Transverse colon (tissue), 4 donors: ENCODE measurements at regions of chr9 and their contacts with region 1.

Region 1: DNA sequence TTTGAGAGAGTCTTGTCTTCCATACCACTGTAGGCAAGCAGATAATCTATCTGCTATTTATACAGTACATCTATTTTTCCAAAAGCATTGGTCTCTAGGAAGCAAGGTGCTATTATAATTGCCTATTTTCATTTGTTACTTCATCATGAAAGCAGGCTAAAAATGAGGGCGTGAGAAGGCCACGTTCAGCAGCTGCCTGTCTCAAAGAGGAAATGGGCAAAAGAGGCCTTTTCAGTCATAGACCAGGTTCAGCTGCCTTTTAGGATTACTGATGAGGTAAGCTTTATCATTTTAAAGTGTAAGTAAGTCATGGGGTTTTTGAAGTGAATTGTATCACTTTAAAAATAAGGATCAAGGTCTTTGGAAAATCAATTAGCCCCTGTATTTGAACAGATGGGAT is 1091.1 kb upstream of the DMAC1 start:
- DNase-seq: no peak
- H3K4me3 ChIP-seq: no peak overlapping the region
- H3K27ac ChIP-seq: no peak overlapping the region
- H3K4me1 ChIP-seq: peaks cover 0 to 20% (median 1%) of the 10 kb centered on the region in 4 donors
- H3K27me3 ChIP-seq: no peaks in the 10 kb centered on the region
- CTCF ChIP-seq: no peak
- EP300 ChIP-seq: no peak
- POLR2A ChIP-seq: no peak

Region 2: DNA sequence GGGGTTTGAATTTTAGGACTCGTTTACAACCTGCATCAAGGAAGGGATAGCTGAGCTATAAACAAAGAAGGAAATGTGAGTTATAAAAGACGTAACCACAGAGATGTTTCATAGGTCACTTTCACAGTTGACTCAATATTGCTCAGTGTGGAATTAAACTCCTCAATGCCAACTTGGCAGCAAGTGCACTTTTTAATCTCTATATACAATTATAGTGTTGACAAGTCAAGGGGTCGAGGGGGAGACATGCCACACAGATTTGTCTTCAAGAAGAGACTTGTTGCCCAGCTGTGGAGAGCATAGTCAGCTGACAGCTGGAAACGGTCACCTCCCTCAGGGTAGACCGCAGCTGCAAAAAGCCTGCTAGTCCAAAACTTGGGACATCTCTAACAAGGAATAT is 927.7 kb before region 1 on chr9:
- in situ Hi-C with region 1: no loop called
- intact Hi-C with region 1: loop called (anchors 5 kb)
- DNase-seq: peak; percentile 13
- H3K4me3 ChIP-seq: no peak overlapping the region
- H3K27ac ChIP-seq: peak overlapping the region; percentile 65 to 74 (median 70)
- H3K4me1 ChIP-seq: peaks cover 0 to 47% (median 25%) of the 10 kb centered on the region in 4 donors
- H3K27me3 ChIP-seq: no peaks in the 10 kb centered on the region
- CTCF ChIP-seq: no peak
- EP300 ChIP-seq: no peak
- POLR2A ChIP-seq: no peak

Region 3: GRCh38 chr9:8868632-8869031 is 22.1 kb before region 1 on chr9:
- in situ Hi-C with region 1: no loop called
- intact Hi-C with region 1: no loop called
- DNase-seq: no peak
- H3K4me3 ChIP-seq: no peak overlapping the region
- H3K27ac ChIP-seq: no peak overlapping the region
- H3K4me1 ChIP-seq: peaks cover 0 to 13% (median 0%) of the 10 kb centered on the region in 4 donors
- H3K27me3 ChIP-seq: no peaks in the 10 kb centered on the region
- CTCF ChIP-seq: no peak
- EP300 ChIP-seq: no peak
- POLR2A ChIP-seq: no peak